ENCODE measurements at regions of chr13 and their contacts with region 1.

Region 1: GRCh38 chr13:73708393-73708985 is 425.7 kb downstream of the KLF12 start:
- DNase-seq: peak in 7 of 9 donors; percentile 58 to 77 (median 68)
- ATAC-seq: peak; percentile 89
- H3K4me3 ChIP-seq: no peak overlapping the region
- H3K4me3 Mint-ChIP-seq: no peak overlapping the region
- H3K27ac ChIP-seq: no peak overlapping the region
- H3K27ac Mint-ChIP-seq: peak overlapping the region in 4 of 9 donors; percentile 46 to 74 (median 61)
- H3K4me1 ChIP-seq: peaks cover 4% of the 10 kb centered on the region in 2 donors
- H3K4me1 Mint-ChIP-seq: peaks cover 11 to 44% (median 24%) of the 10 kb centered on the region in 7 donors
- H3K27me3 ChIP-seq: no peaks in the 10 kb centered on the region
- H3K27me3 Mint-ChIP-seq: no peaks in the 10 kb centered on the region

Region 2: GRCh38 chr13:72643311-72643989 is 1065.0 kb before region 1 on chr13:
- CTCF ChIA-PET with region 1: no interaction called
- POLR2A ChIA-PET with region 1: no interaction called
- intact Hi-C with region 1: loop called (anchors 2 to 5 kb)
- DNase-seq: peak in 6 of 9 donors; percentile 19 to 42 (median 30)
- ATAC-seq: peak; percentile 52
- H3K4me3 ChIP-seq: no peak overlapping the region
- H3K4me3 Mint-ChIP-seq: no peak overlapping the region
- H3K27ac ChIP-seq: no peak overlapping the region
- H3K27ac Mint-ChIP-seq: no peak overlapping the region
- H3K4me1 ChIP-seq: no peaks in the 10 kb centered on the region
- H3K4me1 Mint-ChIP-seq: no peaks in the 10 kb centered on the region
- H3K27me3 ChIP-seq: no peaks in the 10 kb centered on the region
- H3K27me3 Mint-ChIP-seq: peaks cover 3 to 14% (median 4%) of the 10 kb centered on the region in 5 donors

Region 3: GRCh38 chr13:72839831-72840426 is 868.6 kb before region 1 on chr13:
- CTCF ChIA-PET with region 1: interaction called, 4 read pairs
- POLR2A ChIA-PET with region 1: no interaction called
- intact Hi-C with region 1: loop called (anchors 1 kb)
- DNase-seq: peak in 7 of 9 donors; percentile 3 to 42 (median 24)
- ATAC-seq: peak; percentile 71
- H3K4me3 ChIP-seq: no peak overlapping the region
- H3K4me3 Mint-ChIP-seq: no peak overlapping the region
- H3K27ac ChIP-seq: no peak overlapping the region
- H3K27ac Mint-ChIP-seq: no peak overlapping the region
- H3K4me1 ChIP-seq: no peaks in the 10 kb centered on the region
- H3K4me1 Mint-ChIP-seq: peaks cover 0 to 5% (median 0%) of the 10 kb centered on the region in 7 donors
- H3K27me3 ChIP-seq: no peaks in the 10 kb centered on the region
- H3K27me3 Mint-ChIP-seq: no peaks in the 10 kb centered on the region

Region 4: GRCh38 chr13:73058736-73059459 is 649.6 kb before region 1 on chr13 and contains the start of gene KLF5:
- CTCF ChIA-PET with region 1: interaction called, 6 read pairs
- POLR2A ChIA-PET with region 1: interaction called, 3 read pairs
- intact Hi-C with region 1: loop called (anchors 1 kb)
- DNase-seq: peak; percentile 93 to 98 (median 94)
- ATAC-seq: peak; percentile 98
- H3K4me3 ChIP-seq: peak within 1 kb of the TSS; percentile 58
- H3K4me3 Mint-ChIP-seq: peak within 1 kb of the TSS; percentile 82 to 94 (median 90)
- H3K27ac ChIP-seq: peak within 1 kb of the TSS; percentile 42
- H3K27ac Mint-ChIP-seq: peak within 1 kb of the TSS; percentile 38 to 92 (median 79)
- H3K4me1 ChIP-seq: peaks cover 4 to 10% of the 10 kb centered on the region in 2 donors
- H3K4me1 Mint-ChIP-seq: peaks cover 6 to 32% (median 23%) of the 10 kb centered on the region in 7 donors
- H3K27me3 ChIP-seq: peaks cover 5 to 10% of the 10 kb centered on the region in 2 donors
- H3K27me3 Mint-ChIP-seq: peaks cover 19 to 58% (median 40%) of the 10 kb centered on the region in 5 donors
- total RNA-seq, gene KLF5: 3.6 to 13.3 (median 5.7) TPM

Region 5: GRCh38 chr13:73275163-73275562 is 433.3 kb before region 1 on chr13:
- CTCF ChIA-PET with region 1: no interaction called
- POLR2A ChIA-PET with region 1: no interaction called
- intact Hi-C with region 1: loop called in 1 of 2 experiments (anchors 5 kb)
- DNase-seq: peak in 1 of 9 donors; percentile 7
- ATAC-seq: no peak
- H3K4me3 ChIP-seq: no peak overlapping the region
- H3K4me3 Mint-ChIP-seq: peak overlapping the region in 4 of 10 donors; percentile 9 to 51 (median 15)
- H3K27ac ChIP-seq: no peak overlapping the region
- H3K27ac Mint-ChIP-seq: peak overlapping the region in 2 of 9 donors; percentile 47 to 64
- H3K4me1 ChIP-seq: peaks cover 0 to 3% of the 10 kb centered on the region in 2 donors
- H3K4me1 Mint-ChIP-seq: peaks cover 0 to 45% (median 14%) of the 10 kb centered on the region in 7 donors
- H3K27me3 ChIP-seq: no peaks in the 10 kb centered on the region
- H3K27me3 Mint-ChIP-seq: no peaks in the 10 kb centered on the region

Region 6: GRCh38 chr13:73598021-73598712 is 110.3 kb before region 1 on chr13:
- CTCF ChIA-PET with region 1: no interaction called
- POLR2A ChIA-PET with region 1: no interaction called
- intact Hi-C with region 1: loop called in 1 of 2 experiments (anchors 10 kb)
- DNase-seq: no peak
- ATAC-seq: peak; percentile 41
- H3K4me3 ChIP-seq: no peak overlapping the region
- H3K4me3 Mint-ChIP-seq: no peak overlapping the region
- H3K27ac ChIP-seq: no peak overlapping the region
- H3K27ac Mint-ChIP-seq: no peak overlapping the region
- H3K4me1 ChIP-seq: peaks cover 0 to 12% of the 10 kb centered on the region in 2 donors
- H3K4me1 Mint-ChIP-seq: peaks cover 6 to 22% (median 17%) of the 10 kb centered on the region in 7 donors
- H3K27me3 ChIP-seq: no peaks in the 10 kb centered on the region
- H3K27me3 Mint-ChIP-seq: peaks cover 0 to 4% (median 0%) of the 10 kb centered on the region in 5 donors

Region 7: GRCh38 chr13:73647417-73647816 is 61.1 kb before region 1 on chr13:
- CTCF ChIA-PET with region 1: no interaction called
- POLR2A ChIA-PET with region 1: no interaction called
- intact Hi-C with region 1: no loop called
- DNase-seq: no peak
- ATAC-seq: no peak
- H3K4me3 ChIP-seq: no peak overlapping the region
- H3K4me3 Mint-ChIP-seq: no peak overlapping the region
- H3K27ac ChIP-seq: no peak overlapping the region
- H3K27ac Mint-ChIP-seq: no peak overlapping the region
- H3K4me1 ChIP-seq: no peaks in the 10 kb centered on the region
- H3K4me1 Mint-ChIP-seq: no peaks in the 10 kb centered on the region
- H3K27me3 ChIP-seq: no peaks in the 10 kb centered on the region
- H3K27me3 Mint-ChIP-seq: peaks cover 0 to 2% (median 0%) of the 10 kb centered on the region in 5 donors

Region 8: DNA sequence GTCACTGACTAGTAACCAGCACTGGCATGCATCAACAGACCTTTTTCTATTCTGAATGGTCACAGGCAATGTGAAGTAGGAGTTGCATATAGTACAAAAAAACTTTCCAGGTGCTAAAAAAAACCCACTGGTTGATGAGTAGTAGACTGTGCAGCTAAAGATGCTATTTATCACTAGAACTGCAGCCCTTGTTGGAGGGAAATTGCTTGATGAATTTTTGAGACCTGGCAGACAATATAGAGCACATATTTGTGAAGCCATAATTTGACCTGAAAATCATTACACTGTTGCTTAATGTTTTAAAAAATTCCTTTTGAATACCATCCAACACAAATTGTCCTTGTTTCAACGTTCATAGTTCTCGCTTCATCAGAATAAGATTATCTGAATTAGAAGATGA is 15.3 kb before region 1 on chr13:
- CTCF ChIA-PET with region 1: no interaction called
- POLR2A ChIA-PET with region 1: no interaction called
- intact Hi-C with region 1: no loop called
- DNase-seq: no peak
- ATAC-seq: no peak
- H3K4me3 ChIP-seq: no peak overlapping the region
- H3K4me3 Mint-ChIP-seq: no peak overlapping the region
- H3K27ac ChIP-seq: no peak overlapping the region
- H3K27ac Mint-ChIP-seq: peak overlapping the region in 3 of 9 donors; percentile 21 to 47 (median 33)
- H3K4me1 ChIP-seq: no peaks in the 10 kb centered on the region
- H3K4me1 Mint-ChIP-seq: peaks cover 2 to 19% (median 9%) of the 10 kb centered on the region in 7 donors
- H3K27me3 ChIP-seq: no peaks in the 10 kb centered on the region
- H3K27me3 Mint-ChIP-seq: no peaks in the 10 kb centered on the region

Measured in naive thymus-derived CD4-positive, alpha-beta T cell (primary cell).